Psoas muscle (tissue), 8 donors: ENCODE measurements at regions of chr13 and their contacts with region 1.

Region 1: GRCh38 chr13:23558675-23559536 is 11.3 kb upstream of the TNFRSF19 start:
- DNase-seq: peak; percentile 69 to 82
- ATAC-seq: peak; percentile 94 to 97 (median 96)
- H3K4me3 ChIP-seq: peak overlapping the region; percentile 47
- H3K27ac ChIP-seq: peak overlapping the region; percentile 89
- H3K4me1 ChIP-seq: peaks cover 7% of the 10 kb centered on the region
- H3K27me3 ChIP-seq: no peaks in the 10 kb centered on the region
- CTCF ChIP-seq: no peak

Region 2: DNA sequence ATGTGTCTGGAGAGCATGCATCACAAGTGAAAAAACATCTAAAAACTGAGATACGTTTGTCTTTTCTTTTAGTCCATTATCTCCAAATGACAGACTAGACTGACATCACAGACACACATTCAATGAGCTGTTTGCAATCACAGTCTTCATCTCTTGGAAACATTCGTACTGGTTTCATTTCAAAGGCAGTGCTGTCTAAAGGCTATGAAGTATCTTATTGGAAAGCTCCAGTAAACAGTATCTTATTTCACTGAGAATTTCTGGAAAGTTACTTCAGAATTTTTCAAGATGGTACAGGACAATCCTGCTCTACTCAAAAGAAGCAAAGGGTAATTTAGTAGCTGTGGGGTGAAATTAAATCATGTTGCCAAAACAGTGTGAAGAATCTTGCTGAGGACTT is 42.2 kb before region 1 on chr13:
- intact Hi-C with region 1: loop called in 1 of 2 experiments (anchors 5 kb)
- DNase-seq: no peak
- ATAC-seq: peak in 3 of 4 donors; percentile 40 to 86 (median 43)
- H3K4me3 ChIP-seq: no peak overlapping the region
- H3K27ac ChIP-seq: peak overlapping the region; percentile 0
- H3K4me1 ChIP-seq: peaks cover 22% of the 10 kb centered on the region
- H3K27me3 ChIP-seq: no peaks in the 10 kb centered on the region
- CTCF ChIP-seq: no peak